A549 (cell line): ENCODE measurements at regions of chr6 and their contacts with region 1.

Region 1: GRCh38 chr6:73732845-73733675 is 37.1 kb downstream of the CD109 start:
- DNase-seq: peak; percentile 25 to 66
- ATAC-seq: peak; percentile 96 to 97
- H3K4me3 ChIP-seq: no peak overlapping the region
- H3K27ac ChIP-seq: peak overlapping the region in 1 of 2 experiments; percentile 44; a peak in 1 of 6 replicates
- H3K4me1 ChIP-seq: peaks cover 4% of the 10 kb centered on the region; the same call in 1 of the 3 replicates
- CTCF ChIP-seq: peak; percentile 71
- EP300 ChIP-seq: no peak
- POLR2A ChIP-seq: no peak
- RAD21 ChIP-seq: peak; percentile 76 to 79

Region 2: GRCh38 chr6:73653571-73654424 is 79.3 kb before region 1 on chr6 and contains the start of gene SLC17A5:
- CTCF ChIA-PET with region 1: interaction called, 15 read pairs
- POLR2A ChIA-PET with region 1: interaction called, 3 read pairs
- DNase-seq: peak; percentile 87 to 89
- ATAC-seq: peak; percentile 90 to 95
- H3K4me3 ChIP-seq: peak within 1 kb of the TSS; percentile 86
- H3K27ac ChIP-seq: peak within 1 kb of the TSS; percentile 90 to 97
- H3K4me1 ChIP-seq: peaks cover 16% of the 10 kb centered on the region; the same call in 2 of the 3 replicates
- CTCF ChIP-seq: no peak
- EP300 ChIP-seq: no peak
- POLR2A ChIP-seq: peak; percentile 61
- RAD21 ChIP-seq: no peak
- polyA plus RNA-seq, gene SLC17A5: 9.6 and 10.0 TPM in 2 replicates

Region 3: GRCh38 chr6:73675466-73676098 is 57.5 kb before region 1 on chr6:
- CTCF ChIA-PET with region 1: interaction called, 114 read pairs
- POLR2A ChIA-PET with region 1: interaction called, 4 read pairs
- DNase-seq: peak; percentile 53 to 77
- ATAC-seq: peak; percentile 99 to 100
- H3K4me3 ChIP-seq: no peak overlapping the region
- H3K27ac ChIP-seq: no peak overlapping the region; a peak in 1 of 6 replicates
- H3K4me1 ChIP-seq: 0 out of 3 replicates have a peak, but pooled peaks cover 3% of the 10 kb centered on the region
- CTCF ChIP-seq: peak; percentile 84
- EP300 ChIP-seq: no peak
- POLR2A ChIP-seq: no peak
- RAD21 ChIP-seq: peak; percentile 82 to 92

Region 4: DNA sequence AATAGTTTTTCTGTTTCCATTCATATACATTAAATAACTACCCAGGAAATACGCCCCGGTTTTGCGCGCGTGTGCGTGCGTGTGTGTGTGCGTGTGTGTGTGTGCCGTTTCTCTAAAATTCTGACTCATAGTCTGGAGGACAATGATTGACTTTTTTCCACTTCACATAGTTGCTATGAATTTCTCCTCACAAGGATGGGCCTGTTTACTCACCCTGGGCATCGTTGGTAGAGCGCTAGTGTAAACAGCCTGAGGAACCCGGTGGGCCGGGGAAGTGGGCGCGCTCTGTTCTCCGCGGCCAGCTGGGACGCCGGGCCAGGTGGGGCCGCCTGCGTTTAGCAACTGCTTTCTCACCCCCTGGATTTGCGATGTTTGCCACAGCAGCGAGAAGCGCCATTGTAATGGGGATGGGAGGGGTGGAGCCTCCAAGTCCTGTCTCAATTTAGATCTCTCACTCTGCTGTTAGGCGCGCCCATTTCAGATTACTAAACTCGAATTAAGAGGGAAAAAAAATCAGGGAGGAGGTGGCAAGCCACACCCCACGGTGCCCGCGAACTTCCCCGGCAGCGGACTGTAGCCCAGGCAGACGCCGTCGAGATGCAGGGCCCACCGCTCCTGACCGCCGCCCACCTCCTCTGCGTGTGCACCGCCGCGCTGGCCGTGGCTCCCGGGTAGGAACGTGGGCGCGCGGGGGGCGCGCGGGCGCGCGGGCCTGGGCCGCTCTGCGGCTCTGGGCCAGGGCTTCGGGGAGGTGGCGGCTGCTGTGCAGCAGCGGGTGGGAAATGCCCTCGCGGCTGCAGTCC is 37.2 kb before region 1 on chr6 and contains the start of gene CD109:
- CTCF ChIA-PET with region 1: interaction called, 13 read pairs
- POLR2A ChIA-PET with region 1: interaction called, 3 read pairs
- DNase-seq: peak; percentile 65 to 89
- ATAC-seq: peak; percentile 89 to 92
- H3K4me3 ChIP-seq: peak within 1 kb of the TSS; percentile 68
- H3K27ac ChIP-seq: peak within 1 kb of the TSS; percentile 95 to 97
- H3K4me1 ChIP-seq: peaks cover 28% of the 10 kb centered on the region
- CTCF ChIP-seq: no peak
- EP300 ChIP-seq: no peak
- POLR2A ChIP-seq: no peak
- RAD21 ChIP-seq: 0 out of 5 replicates have a peak, but pooled peaks of 1 of the 2 experiments have one; percentile 9
- polyA plus RNA-seq, gene CD109: 47.1 and 56.7 TPM in 2 replicates

Region 5: GRCh38 chr6:73722318-73723060 is 10.6 kb before region 1 on chr6:
- CTCF ChIA-PET with region 1: interaction called, 14 read pairs
- POLR2A ChIA-PET with region 1: no interaction called
- DNase-seq: no peak
- ATAC-seq: no peak
- H3K4me3 ChIP-seq: no peak overlapping the region
- H3K27ac ChIP-seq: no peak overlapping the region
- H3K4me1 ChIP-seq: 0 out of 3 replicates have a peak, but pooled peaks cover 4% of the 10 kb centered on the region
- CTCF ChIP-seq: no peak
- EP300 ChIP-seq: no peak
- POLR2A ChIP-seq: no peak
- RAD21 ChIP-seq: no peak